ENCODE measurements at regions of chr20 and their contacts with region 1.

Region 1: DNA sequence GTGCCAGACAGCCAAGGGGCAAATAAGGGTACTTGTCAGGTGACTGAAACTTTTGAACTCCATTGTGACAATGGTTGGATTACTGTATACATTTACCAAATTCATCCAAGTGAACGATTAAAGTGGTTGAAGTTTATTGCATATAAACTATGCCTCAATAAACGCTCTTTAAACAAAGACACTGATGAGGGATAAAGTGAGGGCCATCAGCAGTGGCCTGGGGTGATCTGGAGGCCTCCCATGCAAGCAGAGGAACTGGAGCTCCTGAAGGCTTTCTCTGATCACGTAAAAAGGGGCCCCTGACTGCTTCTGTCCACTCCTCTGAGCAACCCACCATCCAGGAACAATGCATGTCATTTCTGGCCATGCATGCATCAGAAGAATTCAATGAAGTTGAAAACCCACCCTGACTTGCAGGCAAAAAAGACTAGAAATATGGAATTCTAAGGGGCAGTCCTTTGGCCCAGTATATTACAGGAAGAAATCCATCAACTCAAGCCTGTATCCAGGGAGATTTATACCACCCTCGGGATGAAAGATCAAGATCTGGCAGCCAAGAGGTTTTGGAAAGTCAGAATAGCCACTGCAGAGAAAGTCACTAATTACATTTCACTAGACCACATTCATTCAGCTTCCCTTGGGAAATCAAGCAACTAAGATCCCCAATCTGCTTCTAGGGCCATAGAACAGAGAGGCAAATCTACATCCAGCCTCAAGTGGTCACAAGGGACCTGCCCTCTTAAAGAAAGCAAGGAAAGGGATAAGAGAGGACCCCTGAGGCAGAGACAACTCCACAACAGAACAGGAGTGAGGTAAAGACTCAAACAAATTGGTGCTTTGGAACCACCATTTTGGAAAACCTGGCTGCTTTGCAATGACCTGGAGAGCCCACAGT is 31.7 kb upstream of the RAB22A start:
- DNase-seq: no peak
- H3K4me3 ChIP-seq: no peak overlapping the region
- H3K27ac ChIP-seq: no peak overlapping the region
- H3K4me1 ChIP-seq: no peaks in the 10 kb centered on the region
- H3K27me3 ChIP-seq: no peaks in the 10 kb centered on the region
- CTCF ChIP-seq: no peak

Region 2: GRCh38 chr20:57947421-57948179 is 330.2 kb before region 1 on chr20:
- CTCF ChIA-PET with region 1: no interaction called
- dilution Hi-C with region 1: no loop called
- in situ Hi-C with region 1: no loop called
- intact Hi-C with region 1: no loop called
- DNase-seq: no peak
- H3K4me3 ChIP-seq: no peak overlapping the region
- H3K27ac ChIP-seq: no peak overlapping the region
- H3K4me1 ChIP-seq: no peaks in the 10 kb centered on the region
- H3K27me3 ChIP-seq: no peaks in the 10 kb centered on the region
- CTCF ChIP-seq: no peak

Region 3: GRCh38 chr20:58349586-58349985 is 71.8 kb after region 1 on chr20:
- CTCF ChIA-PET with region 1: no interaction called
- dilution Hi-C with region 1: loop called (anchors 5 kb)
- in situ Hi-C with region 1: no loop called
- intact Hi-C with region 1: no loop called
- DNase-seq: peak; percentile 71
- H3K4me3 ChIP-seq: no peak overlapping the region
- H3K27ac ChIP-seq: no peak overlapping the region
- H3K4me1 ChIP-seq: peaks cover 15% of the 10 kb centered on the region
- H3K27me3 ChIP-seq: no peaks in the 10 kb centered on the region
- CTCF ChIP-seq: no peak

Region 4: GRCh38 chr20:58361481-58362205 is 83.8 kb after region 1 on chr20:
- CTCF ChIA-PET with region 1: no interaction called
- dilution Hi-C with region 1: no loop called
- in situ Hi-C with region 1: no loop called
- intact Hi-C with region 1: no loop called
- DNase-seq: no peak
- H3K4me3 ChIP-seq: no peak overlapping the region
- H3K27ac ChIP-seq: no peak overlapping the region
- H3K4me1 ChIP-seq: no peaks in the 10 kb centered on the region
- H3K27me3 ChIP-seq: no peaks in the 10 kb centered on the region
- CTCF ChIP-seq: no peak